T-cell (primary cell): ENCODE measurements at regions of chr2 and their contacts with region 1.

Region 1: DNA sequence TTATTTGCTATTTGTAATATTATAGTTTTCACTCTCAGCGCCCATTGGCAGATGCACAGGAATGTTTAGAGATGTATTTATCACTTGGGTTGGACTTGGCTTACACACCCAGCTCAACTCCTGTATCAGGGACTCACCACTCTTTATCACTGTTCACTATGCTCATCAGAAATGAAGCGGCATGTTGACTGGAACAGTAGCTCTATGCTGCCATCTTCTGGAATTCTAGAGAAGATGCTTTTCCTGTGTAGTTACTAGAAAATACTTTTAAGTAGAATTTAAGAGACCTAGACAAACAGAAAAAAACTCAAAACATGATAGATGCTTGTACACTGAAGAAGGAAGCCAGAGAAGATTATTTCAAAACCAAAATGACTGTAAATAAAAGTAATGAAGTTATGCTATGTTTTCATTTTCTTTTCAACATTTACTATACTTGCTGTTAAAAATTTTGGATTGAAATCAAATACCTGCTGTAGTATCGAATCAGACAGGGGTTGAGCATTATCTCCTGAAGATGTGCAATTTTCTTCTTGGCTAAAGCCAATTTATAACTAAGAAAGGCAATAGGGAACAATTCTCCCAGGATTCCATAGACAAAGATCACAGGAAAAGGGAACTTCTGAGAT is 47.4 kb upstream of the NXPH2 start:
- DNase-seq: peak in 10 of 35 experiments; percentile 0 to 68 (median 4)
- ATAC-seq: peak in 2 of 4 experiments; percentile 35 to 41
- H3K4me3 ChIP-seq: no peak overlapping the region
- H3K4me3 Mint-ChIP-seq: no peak overlapping the region
- H3K27ac ChIP-seq: no peak overlapping the region
- H3K27ac Mint-ChIP-seq: no peak overlapping the region
- H3K4me1 ChIP-seq: no peaks in the 10 kb centered on the region
- H3K4me1 Mint-ChIP-seq: no peaks in the 10 kb centered on the region
- H3K27me3 ChIP-seq: peaks cover 0 to 4% of the 10 kb centered on the region in 2 experiments
- H3K27me3 Mint-ChIP-seq: peaks cover 0 to 10% of the 10 kb centered on the region in 2 donors

Region 2: DNA sequence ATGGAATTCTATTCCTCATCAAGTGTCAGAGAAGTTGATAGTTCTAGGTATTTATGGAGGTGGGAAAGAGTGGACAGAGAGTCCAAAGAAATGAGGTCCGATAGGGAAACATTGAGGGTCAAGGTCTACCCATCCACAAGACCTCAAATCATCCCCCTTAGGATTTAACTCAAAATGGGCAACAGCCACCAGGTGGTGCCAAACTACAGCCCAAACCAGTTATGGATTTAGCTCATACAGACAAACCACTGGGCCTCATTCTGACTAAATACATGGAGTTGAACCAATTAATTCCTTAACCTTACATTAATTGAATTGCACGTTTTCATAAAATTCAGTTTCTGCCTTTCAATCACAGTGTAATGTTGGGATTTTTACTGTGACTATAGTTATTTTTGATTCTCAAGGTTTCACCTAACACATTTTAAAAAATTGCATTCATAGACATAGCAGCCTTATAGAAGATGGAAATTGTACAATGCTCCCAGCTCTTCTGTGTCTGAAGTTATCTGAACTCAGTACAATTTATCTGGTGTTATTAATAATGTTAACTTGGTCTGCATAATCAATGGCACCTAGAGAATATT is 961.5 kb before region 1 on chr2:
- CTCF ChIA-PET with region 1: interaction called, 7 to 34 read pairs
- POLR2A ChIA-PET with region 1: no interaction called
- DNase-seq: peak in 28 of 35 experiments; percentile 2 to 47 (median 22)
- ATAC-seq: no peak
- H3K4me3 ChIP-seq: no peak overlapping the region
- H3K4me3 Mint-ChIP-seq: no peak overlapping the region
- H3K27ac ChIP-seq: no peak overlapping the region
- H3K27ac Mint-ChIP-seq: no peak overlapping the region
- H3K4me1 ChIP-seq: no peaks in the 10 kb centered on the region
- H3K4me1 Mint-ChIP-seq: no peaks in the 10 kb centered on the region
- H3K27me3 ChIP-seq: no peaks in the 10 kb centered on the region
- H3K27me3 Mint-ChIP-seq: peaks cover 2 to 5% of the 10 kb centered on the region in 2 donors

Region 3: DNA sequence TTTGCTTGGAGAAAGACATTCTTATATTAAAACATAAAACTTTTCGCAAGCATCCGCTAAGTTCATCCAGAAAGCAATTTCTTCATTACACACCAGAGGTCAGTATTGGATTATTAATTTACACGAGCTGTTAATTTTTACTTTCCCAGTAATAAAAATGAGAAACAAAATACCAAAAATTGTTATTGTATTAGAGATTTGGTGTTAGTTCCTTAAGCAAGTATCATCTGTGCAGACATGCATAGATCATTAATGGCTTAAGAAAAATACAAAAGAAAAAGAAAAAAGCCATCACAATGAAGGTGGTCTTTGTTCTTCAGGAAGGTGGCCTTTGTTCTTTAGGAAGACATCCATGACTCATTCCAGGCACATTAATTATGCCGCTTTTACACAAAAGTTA is 916.9 kb before region 1 on chr2:
- CTCF ChIA-PET with region 1: interaction called, 11 to 15 read pairs
- POLR2A ChIA-PET with region 1: no interaction called
- DNase-seq: peak in 1 of 35 experiments; percentile 3
- ATAC-seq: no peak
- H3K4me3 ChIP-seq: no peak overlapping the region
- H3K4me3 Mint-ChIP-seq: no peak overlapping the region
- H3K27ac ChIP-seq: no peak overlapping the region
- H3K27ac Mint-ChIP-seq: no peak overlapping the region
- H3K4me1 ChIP-seq: no peaks in the 10 kb centered on the region
- H3K4me1 Mint-ChIP-seq: no peaks in the 10 kb centered on the region
- H3K27me3 ChIP-seq: no peaks in the 10 kb centered on the region
- H3K27me3 Mint-ChIP-seq: no peaks in the 10 kb centered on the region